ENCODE measurements at regions of chr19 and their contacts with region 1.

Region 1: GRCh38 chr19:42529248-42529764 is 1.0 kb upstream of the CEACAM1 start:
- DNase-seq: peak; percentile 79 to 94
- ATAC-seq: peak; percentile 79 to 95
- H3K4me3 ChIP-seq: no peak overlapping the region
- H3K27ac ChIP-seq: peak overlapping the region; percentile 60 to 63; a peak in 5 of 6 replicates
- H3K4me1 ChIP-seq: peaks cover 12% of the 10 kb centered on the region
- CTCF ChIP-seq: peak; percentile 98
- EP300 ChIP-seq: no peak
- POLR2A ChIP-seq: no peak
- RAD21 ChIP-seq: peak; percentile 98

Region 2: GRCh38 chr19:42440357-42441048 is 88.8 kb before region 1 on chr19:
- CTCF ChIA-PET with region 1: interaction called, 115 read pairs
- POLR2A ChIA-PET with region 1: no interaction called
- DNase-seq: peak; percentile 87 to 95
- ATAC-seq: peak; percentile 73 to 85
- H3K4me3 ChIP-seq: no peak overlapping the region
- H3K27ac ChIP-seq: no peak overlapping the region
- H3K4me1 ChIP-seq: peaks cover 30% of the 10 kb centered on the region
- CTCF ChIP-seq: peak; percentile 99
- EP300 ChIP-seq: no peak
- POLR2A ChIP-seq: no peak
- RAD21 ChIP-seq: peak; percentile 38 to 50

Region 3: GRCh38 chr19:42468273-42468796 is 61.0 kb before region 1 on chr19:
- CTCF ChIA-PET with region 1: interaction called, 78 read pairs
- POLR2A ChIA-PET with region 1: no interaction called
- DNase-seq: peak in 1 of 2 experiments; percentile 55
- ATAC-seq: peak; percentile 41 to 67; a peak in 4 of 6 replicates
- H3K4me3 ChIP-seq: no peak overlapping the region
- H3K27ac ChIP-seq: peak overlapping the region in 1 of 2 experiments; percentile 34; a peak in 2 of 6 replicates
- H3K4me1 ChIP-seq: peaks cover 33% of the 10 kb centered on the region
- CTCF ChIP-seq: no peak
- EP300 ChIP-seq: no peak
- POLR2A ChIP-seq: no peak
- RAD21 ChIP-seq: no peak

Region 4: GRCh38 chr19:42508892-42509444 is 20.3 kb before region 1 on chr19:
- CTCF ChIA-PET with region 1: interaction called, 43 read pairs
- POLR2A ChIA-PET with region 1: no interaction called
- DNase-seq: no peak
- ATAC-seq: no peak
- H3K4me3 ChIP-seq: no peak overlapping the region
- H3K27ac ChIP-seq: no peak overlapping the region
- H3K4me1 ChIP-seq: no peaks in the 10 kb centered on the region
- CTCF ChIP-seq: no peak
- EP300 ChIP-seq: no peak
- POLR2A ChIP-seq: no peak
- RAD21 ChIP-seq: no peak

Region 5: DNA sequence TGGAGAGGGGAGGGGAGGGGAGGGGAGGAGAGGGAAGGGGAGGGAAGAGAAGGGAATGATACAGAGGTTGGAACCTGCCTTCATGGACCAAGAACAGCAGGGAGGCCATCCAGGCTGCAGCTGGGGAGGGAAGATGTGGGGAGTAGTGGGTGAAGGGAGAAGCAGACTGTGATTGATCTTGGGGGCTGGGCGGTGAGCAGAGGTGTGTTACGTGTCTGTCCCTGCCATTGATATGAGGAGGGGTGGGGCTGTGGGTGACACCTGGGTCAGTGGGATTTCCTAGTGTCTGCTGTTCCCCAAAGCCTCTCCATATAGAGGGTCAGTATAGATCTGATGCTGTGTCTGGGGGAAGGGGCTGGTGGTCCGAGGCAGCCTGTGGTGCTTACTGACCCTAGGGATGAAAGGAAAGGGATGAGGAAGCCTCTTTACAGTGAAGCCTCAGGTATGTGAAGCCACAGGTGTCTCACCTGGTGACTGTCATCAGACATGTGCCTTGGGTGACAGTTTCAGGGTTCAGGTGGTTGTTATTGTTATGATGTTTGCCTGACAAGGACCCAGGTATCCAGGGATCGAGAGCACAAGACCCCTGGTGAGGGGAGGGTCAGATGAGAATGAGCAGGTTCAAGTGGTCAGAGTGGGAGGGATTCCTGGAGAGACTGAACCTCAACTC is 17.7 kb after region 1 on chr19:
- CTCF ChIA-PET with region 1: interaction called, 87 read pairs
- POLR2A ChIA-PET with region 1: no interaction called
- DNase-seq: no peak
- ATAC-seq: no peak
- H3K4me3 ChIP-seq: no peak overlapping the region
- H3K27ac ChIP-seq: no peak overlapping the region
- H3K4me1 ChIP-seq: no peaks in the 10 kb centered on the region
- CTCF ChIP-seq: no peak
- EP300 ChIP-seq: no peak
- POLR2A ChIP-seq: no peak
- RAD21 ChIP-seq: no peak

Region 6: GRCh38 chr19:42571116-42571515 is 41.8 kb after region 1 on chr19:
- CTCF ChIA-PET with region 1: interaction called, 14 read pairs
- POLR2A ChIA-PET with region 1: no interaction called
- DNase-seq: no peak
- ATAC-seq: no peak
- H3K4me3 ChIP-seq: no peak overlapping the region
- H3K27ac ChIP-seq: no peak overlapping the region
- H3K4me1 ChIP-seq: no peaks in the 10 kb centered on the region
- CTCF ChIP-seq: no peak
- EP300 ChIP-seq: no peak
- POLR2A ChIP-seq: no peak
- RAD21 ChIP-seq: no peak

Region 7: GRCh38 chr19:42613666-42614065 is 84.4 kb after region 1 on chr19:
- CTCF ChIA-PET with region 1: no interaction called
- POLR2A ChIA-PET with region 1: no interaction called
- DNase-seq: no peak
- ATAC-seq: no peak
- H3K4me3 ChIP-seq: no peak overlapping the region
- H3K27ac ChIP-seq: no peak overlapping the region
- H3K4me1 ChIP-seq: no peaks in the 10 kb centered on the region
- CTCF ChIP-seq: no peak
- EP300 ChIP-seq: no peak
- POLR2A ChIP-seq: no peak
- RAD21 ChIP-seq: no peak